ENCODE measurements at regions of chr13 and their contacts with region 1.

Region 1: DNA sequence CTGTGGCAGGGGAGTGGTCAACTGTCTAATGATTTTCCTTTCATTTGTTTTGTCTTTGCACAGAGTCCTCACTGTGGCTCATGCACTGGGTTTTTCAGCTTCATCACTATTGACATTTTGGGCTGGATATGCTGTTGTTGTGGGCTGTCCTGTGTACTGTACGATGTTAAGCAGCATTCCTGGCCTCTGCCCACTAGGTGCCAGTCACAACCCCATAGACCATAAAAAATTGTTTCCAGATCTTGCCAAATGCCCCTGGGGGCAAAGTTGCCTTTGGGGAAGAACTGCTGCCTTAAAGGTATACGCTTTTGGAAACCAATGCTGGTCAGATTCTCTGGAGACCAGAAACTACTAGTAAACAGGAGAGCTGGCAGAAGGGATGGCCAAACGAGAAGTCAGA is 310.4 kb downstream of the SPRY2 start:
- H3K4me3 Mint-ChIP-seq: no peak overlapping the region
- H3K27ac Mint-ChIP-seq: no peak overlapping the region
- H3K4me1 Mint-ChIP-seq: peaks cover 12% of the 10 kb centered on the region
- H3K27me3 Mint-ChIP-seq: no peaks in the 10 kb centered on the region

Region 2: DNA sequence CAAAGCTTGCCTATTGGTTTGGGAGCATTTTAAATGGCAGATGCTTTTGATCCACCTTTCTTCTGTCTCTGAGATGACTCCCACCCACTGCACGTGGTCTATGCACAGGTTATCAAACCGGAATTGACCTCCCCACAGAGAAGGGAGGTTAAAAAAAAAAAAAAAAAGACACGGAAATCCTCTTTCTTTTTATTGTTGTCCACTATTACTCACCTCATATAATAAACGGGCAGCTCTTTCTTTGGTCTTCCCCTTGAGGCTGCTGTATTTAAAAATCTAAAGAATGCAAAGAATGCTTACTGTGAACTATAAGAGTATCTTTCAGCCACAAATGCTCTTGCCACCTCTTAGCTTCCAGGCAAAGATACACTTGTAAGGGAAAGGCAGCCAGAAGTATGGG is 219.8 kb before region 1 on chr13:
- intact Hi-C with region 1: loop called (anchors 10 kb)
- H3K4me3 Mint-ChIP-seq: no peak overlapping the region
- H3K27ac Mint-ChIP-seq: no peak overlapping the region
- H3K4me1 Mint-ChIP-seq: peaks cover 24% of the 10 kb centered on the region
- H3K27me3 Mint-ChIP-seq: peaks cover 4% of the 10 kb centered on the region

Region 3: DNA sequence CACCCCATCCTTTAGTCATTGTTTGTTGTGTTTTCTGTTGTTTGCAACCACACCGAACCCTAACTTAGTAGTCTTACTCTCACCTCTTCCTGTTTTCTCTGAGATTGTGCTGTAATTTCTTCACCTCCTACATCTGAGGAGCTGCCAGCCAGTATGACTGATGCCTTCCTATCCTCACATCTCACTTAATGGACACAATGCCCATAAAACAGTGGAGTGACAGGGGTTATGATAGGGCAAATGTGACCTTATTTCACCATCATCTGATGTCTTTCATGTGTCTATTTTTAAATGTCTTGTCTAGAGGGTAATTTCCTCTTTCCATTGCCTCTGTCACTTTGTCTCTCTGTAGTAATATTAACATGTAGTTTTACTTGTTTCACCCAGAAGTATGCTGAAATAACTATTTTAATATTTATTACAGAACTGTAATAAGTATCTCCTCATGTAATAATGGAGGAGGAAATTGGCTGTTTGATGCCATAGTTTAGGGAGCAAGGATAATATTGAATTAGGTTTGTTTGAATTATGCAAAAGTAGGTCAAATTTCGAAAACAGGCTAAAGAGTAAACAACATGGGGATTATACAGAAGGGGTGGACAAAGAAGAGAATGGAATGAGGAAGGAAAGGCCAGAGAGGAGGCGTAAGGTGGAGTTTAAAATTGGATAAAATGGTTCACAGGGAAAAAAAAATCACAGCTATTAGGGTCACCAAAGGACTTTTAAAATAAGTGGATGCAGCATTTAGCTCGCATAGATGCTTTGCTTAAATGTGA is 413.9 kb after region 1 on chr13:
- intact Hi-C with region 1: loop called (anchors 10 kb)
- H3K4me3 Mint-ChIP-seq: no peak overlapping the region
- H3K27ac Mint-ChIP-seq: no peak overlapping the region
- H3K4me1 Mint-ChIP-seq: peaks cover 45% of the 10 kb centered on the region
- H3K27me3 Mint-ChIP-seq: peaks cover 71% of the 10 kb centered on the region

Measured in dendritic cell treated with granulocyte-macrophage colony-stimulating factor and Interleukin-4, amounts not matched to agents 40 ng/mL and 50 ng/mL, for 4 days (primary cell).